ENCODE measurements at regions of chr1 and their contacts with region 1.

Region 1: GRCh38 chr1:161038523-161039153 is at the start of gene TSTD1:
- DNase-seq: peak; percentile 89
- ATAC-seq: peak; percentile 91
- H3K4me3 Mint-ChIP-seq: peak within 1 kb of the TSS; percentile 91
- H3K27ac Mint-ChIP-seq: peak within 1 kb of the TSS; percentile 94
- H3K4me1 Mint-ChIP-seq: peaks cover 63% of the 10 kb centered on the region
- H3K27me3 Mint-ChIP-seq: no peaks in the 10 kb centered on the region
- total RNA-seq, gene TSTD1: 63.2 to 63.3 TPM

Region 2: GRCh38 chr1:161021165-161021960 is 17.3 kb before region 1 on chr1:
- CTCF ChIA-PET with region 1: interaction called, 12 read pairs
- POLR2A ChIA-PET with region 1: interaction called, 15 read pairs
- DNase-seq: peak; percentile 90
- ATAC-seq: peak; percentile 95
- H3K4me3 Mint-ChIP-seq: peak overlapping the region; percentile 87
- H3K27ac Mint-ChIP-seq: peak overlapping the region; percentile 79
- H3K4me1 Mint-ChIP-seq: peaks cover 43% of the 10 kb centered on the region
- H3K27me3 Mint-ChIP-seq: peaks cover 2% of the 10 kb centered on the region